Endothelial cell of umbilical vein (primary cell): ENCODE measurements at regions of chr10 and their contacts with region 1.

Region 1: GRCh38 chr10:7687228-7687907 is 15.7 kb upstream of the ITIH2 start:
- DNase-seq: peak; percentile 86
- H3K4me3 ChIP-seq: no peak overlapping the region
- H3K27ac ChIP-seq: no peak overlapping the region
- H3K4me1 ChIP-seq: no peaks in the 10 kb centered on the region
- H3K27me3 ChIP-seq: peaks cover 0 to 1% of the 10 kb centered on the region in 2 experiments
- CTCF ChIP-seq: peak; percentile 83 to 88
- POLR2A ChIP-seq: no peak

Region 2: GRCh38 chr10:6416892-6417512 is 1270.4 kb before region 1 on chr10:
- CTCF ChIA-PET with region 1: interaction called, 10 read pairs
- POLR2A ChIA-PET with region 1: no interaction called
- dilution Hi-C with region 1: no loop called
- intact Hi-C with region 1: loop called (anchors 10 kb)
- DNase-seq: peak; percentile 71
- H3K4me3 ChIP-seq: no peak overlapping the region
- H3K27ac ChIP-seq: no peak overlapping the region
- H3K4me1 ChIP-seq: no peaks in the 10 kb centered on the region
- H3K27me3 ChIP-seq: peaks cover 6 to 7% of the 10 kb centered on the region in 2 experiments
- CTCF ChIP-seq: peak; percentile 39 to 44
- POLR2A ChIP-seq: no peak

Region 3: GRCh38 chr10:6920072-6921019 is 767.0 kb before region 1 on chr10:
- CTCF ChIA-PET with region 1: no interaction called
- POLR2A ChIA-PET with region 1: no interaction called
- dilution Hi-C with region 1: no loop called
- intact Hi-C with region 1: loop called (anchors 5 kb)
- DNase-seq: peak; percentile 48
- H3K4me3 ChIP-seq: no peak overlapping the region
- H3K27ac ChIP-seq: no peak overlapping the region
- H3K4me1 ChIP-seq: peaks cover 5% of the 10 kb centered on the region
- H3K27me3 ChIP-seq: no peaks in the 10 kb centered on the region
- CTCF ChIP-seq: peak; percentile 46 to 70
- POLR2A ChIP-seq: no peak

Region 4: DNA sequence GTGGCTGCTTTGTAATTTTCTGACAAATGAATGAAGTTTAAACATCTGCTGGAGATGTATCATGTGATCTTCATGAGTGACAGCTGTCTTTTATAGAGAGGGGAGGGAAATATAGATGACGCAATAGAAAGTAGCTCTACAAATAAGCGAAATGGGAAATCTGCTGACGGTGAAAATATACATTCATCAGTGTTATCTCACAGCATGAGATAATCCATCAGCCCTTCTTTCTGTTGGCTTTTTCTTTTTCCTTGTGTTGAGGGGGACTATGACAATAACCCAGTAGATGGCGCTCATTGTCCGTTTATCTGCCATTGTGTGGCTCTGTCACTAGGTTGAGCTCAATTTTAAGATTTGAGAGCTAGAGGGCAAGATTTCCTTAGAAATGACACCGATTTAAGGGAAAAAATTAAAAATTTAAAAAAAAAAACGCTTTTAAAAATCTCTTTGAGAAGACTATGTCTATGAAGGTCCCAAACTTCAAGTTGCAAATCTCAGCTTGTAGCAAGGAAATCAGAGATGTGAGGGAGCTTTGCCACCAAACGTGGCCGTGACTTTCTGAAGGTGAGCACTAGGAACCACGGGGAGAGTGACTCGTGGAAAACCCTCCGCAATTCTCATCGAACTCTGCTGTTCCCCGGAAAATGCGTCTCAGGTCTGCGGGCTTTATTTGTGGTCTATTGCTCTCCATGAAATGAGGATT is 161.9 kb before region 1 on chr10:
- CTCF ChIA-PET with region 1: interaction called, 132 read pairs
- POLR2A ChIA-PET with region 1: no interaction called
- dilution Hi-C with region 1: no loop called
- intact Hi-C with region 1: loop called (anchors 1 kb)
- DNase-seq: peak; percentile 62
- H3K4me3 ChIP-seq: no peak overlapping the region
- H3K27ac ChIP-seq: no peak overlapping the region
- H3K4me1 ChIP-seq: no peaks in the 10 kb centered on the region
- H3K27me3 ChIP-seq: no peaks in the 10 kb centered on the region
- CTCF ChIP-seq: peak; percentile 54 to 59
- POLR2A ChIP-seq: no peak

Region 5: DNA sequence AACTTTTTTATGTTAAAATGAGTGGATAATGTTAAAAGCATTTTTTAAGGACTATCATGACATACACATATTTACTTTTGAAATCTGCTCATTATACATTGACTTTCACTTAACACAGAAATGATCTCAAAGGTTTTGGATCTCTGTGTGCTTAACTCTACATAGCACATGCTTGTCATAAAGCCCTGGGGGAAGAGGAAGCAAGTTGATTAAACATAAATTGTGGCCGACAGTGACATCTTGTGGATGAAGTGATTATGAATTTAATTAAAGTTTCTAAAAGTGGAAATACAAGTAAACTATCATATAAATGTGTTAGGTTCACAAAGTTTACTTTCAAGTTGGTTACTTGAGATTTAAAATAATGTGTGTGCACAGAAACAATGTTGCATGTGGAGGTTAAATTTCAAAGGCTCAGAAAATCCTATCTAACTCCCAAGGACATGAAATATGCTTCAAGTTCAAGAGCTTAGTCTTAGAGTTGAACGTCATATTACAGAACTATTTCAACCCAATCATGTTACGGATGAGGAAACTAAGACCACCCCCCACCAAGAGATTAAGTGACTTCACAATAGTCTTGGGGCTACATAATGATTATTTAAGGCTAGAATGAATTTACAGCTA is 1614.9 kb after region 1 on chr10:
- CTCF ChIA-PET with region 1: interaction called, 6 read pairs
- POLR2A ChIA-PET with region 1: no interaction called
- dilution Hi-C with region 1: no loop called
- intact Hi-C with region 1: loop called (anchors 1 kb)
- DNase-seq: peak; percentile 79
- H3K4me3 ChIP-seq: no peak overlapping the region
- H3K27ac ChIP-seq: no peak overlapping the region
- H3K4me1 ChIP-seq: no peaks in the 10 kb centered on the region
- H3K27me3 ChIP-seq: peaks cover 0 to 2% of the 10 kb centered on the region in 2 experiments
- CTCF ChIP-seq: peak in 1 of 2 donors; percentile 8
- POLR2A ChIP-seq: no peak